CD8-positive, alpha-beta memory T cell (primary cell): ENCODE measurements at regions of chrX and their contacts with region 1.

Region 1: GRCh38 chrX:71652405-71652804 is 14.9 kb upstream of the LOC101059915 start:
- DNase-seq: peak; percentile 19 to 66 (median 51)
- H3K4me3 ChIP-seq: no peak overlapping the region
- H3K4me3 Mint-ChIP-seq: no peak overlapping the region
- H3K27ac ChIP-seq: no peak overlapping the region
- H3K27ac Mint-ChIP-seq: peak overlapping the region in 2 of 8 donors; percentile 36 to 48
- H3K4me1 ChIP-seq: no peaks in the 10 kb centered on the region
- H3K4me1 Mint-ChIP-seq: peaks cover 14 to 23% (median 16%) of the 10 kb centered on the region in 3 donors
- H3K27me3 ChIP-seq: no peaks in the 10 kb centered on the region
- H3K27me3 Mint-ChIP-seq: peaks cover 0 to 5% of the 10 kb centered on the region in 2 donors

Region 2: GRCh38 chrX:71622576-71623450 is 29.6 kb before region 1 on chrX:
- CTCF ChIA-PET with region 1: interaction called, 35 read pairs
- POLR2A ChIA-PET with region 1: interaction called, 5 read pairs
- DNase-seq: peak; percentile 57 to 90 (median 67)
- H3K4me3 ChIP-seq: peak overlapping the region; percentile 36
- H3K4me3 Mint-ChIP-seq: peak overlapping the region; percentile 74 to 91 (median 83)
- H3K27ac ChIP-seq: peak overlapping the region; percentile 57
- H3K27ac Mint-ChIP-seq: peak overlapping the region; percentile 95 to 100 (median 95)
- H3K4me1 ChIP-seq: peaks cover 61% of the 10 kb centered on the region
- H3K4me1 Mint-ChIP-seq: peaks cover 65 to 72% (median 70%) of the 10 kb centered on the region in 3 donors
- H3K27me3 ChIP-seq: no peaks in the 10 kb centered on the region
- H3K27me3 Mint-ChIP-seq: peaks cover 0 to 3% of the 10 kb centered on the region in 2 donors